Cardiac septum (tissue), 1 donor: ENCODE measurements at regions of chr10 and their contacts with region 1.

Region 1: DNA sequence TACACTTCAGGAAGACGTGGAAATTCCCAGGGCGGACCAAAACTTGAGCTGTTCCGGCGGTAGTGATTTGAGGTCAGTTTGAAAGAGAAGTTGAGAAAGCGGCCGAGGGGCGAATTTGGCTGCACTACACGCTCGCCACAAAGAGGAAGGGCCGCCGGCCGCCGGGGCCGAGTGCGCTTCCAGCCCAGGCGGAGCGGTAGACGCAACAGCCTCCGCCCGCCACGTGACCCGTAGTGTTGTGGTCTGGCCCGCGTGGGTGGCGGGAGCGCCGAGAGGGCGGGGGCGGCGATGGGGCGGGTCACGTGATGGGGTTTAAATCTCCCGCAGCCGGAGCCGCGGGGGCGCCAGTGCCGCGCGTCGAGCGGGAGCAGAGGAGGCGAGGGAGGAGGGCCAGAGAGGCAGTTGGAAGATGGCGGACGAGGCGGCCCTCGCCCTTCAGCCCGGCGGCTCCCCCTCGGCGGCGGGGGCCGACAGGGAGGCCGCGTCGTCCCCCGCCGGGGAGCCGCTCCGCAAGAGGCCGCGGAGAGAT is at the start of gene SIRT1:
- DNase-seq: peak; percentile 97
- total RNA-seq, gene SIRT1: 16.1 TPM

Region 2: DNA sequence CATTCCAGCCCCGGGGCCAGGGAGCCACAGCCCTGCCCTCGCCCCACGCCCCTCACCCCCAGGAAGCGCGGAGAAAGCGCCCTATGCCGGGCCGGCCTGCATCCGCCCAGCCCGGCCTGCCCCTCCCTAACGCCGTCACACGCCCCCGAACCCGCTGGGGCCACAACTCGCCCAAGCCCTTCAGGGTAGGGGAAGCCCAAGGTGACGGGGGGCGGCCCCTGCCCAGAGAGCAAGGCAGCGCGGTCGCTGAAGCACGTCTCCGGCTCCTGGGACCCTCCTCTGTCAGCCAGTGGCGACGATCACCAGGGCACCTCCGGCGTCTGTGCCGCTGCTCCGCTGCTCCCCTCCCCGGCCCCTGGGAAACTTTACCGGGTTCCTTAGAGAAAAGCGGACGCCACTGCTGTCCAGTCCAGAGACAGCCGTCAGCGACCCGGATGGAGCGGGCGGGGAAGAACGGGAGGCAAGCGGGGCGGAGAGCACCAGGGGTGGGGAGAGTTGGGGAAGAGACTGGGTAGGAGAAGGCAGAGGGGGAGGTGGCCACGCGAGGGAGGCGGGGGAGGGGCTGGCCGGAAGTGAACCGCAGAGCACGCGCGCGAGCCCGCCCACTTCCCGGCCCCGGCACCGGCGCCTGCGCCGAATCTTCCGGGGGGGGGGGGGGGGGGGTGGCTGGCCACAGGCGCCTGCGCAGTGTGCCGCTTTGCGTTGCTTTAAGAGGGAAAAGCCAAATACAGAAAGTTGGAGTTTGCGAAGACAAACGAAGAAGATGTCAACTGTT is 190.6 kb after region 1 on chr10 and contains the start of gene HERC4:
- intact Hi-C with region 1: loop called (anchors 1 kb)
- DNase-seq: peak; percentile 98
- total RNA-seq, gene HERC4: 43.0 TPM

Region 3: DNA sequence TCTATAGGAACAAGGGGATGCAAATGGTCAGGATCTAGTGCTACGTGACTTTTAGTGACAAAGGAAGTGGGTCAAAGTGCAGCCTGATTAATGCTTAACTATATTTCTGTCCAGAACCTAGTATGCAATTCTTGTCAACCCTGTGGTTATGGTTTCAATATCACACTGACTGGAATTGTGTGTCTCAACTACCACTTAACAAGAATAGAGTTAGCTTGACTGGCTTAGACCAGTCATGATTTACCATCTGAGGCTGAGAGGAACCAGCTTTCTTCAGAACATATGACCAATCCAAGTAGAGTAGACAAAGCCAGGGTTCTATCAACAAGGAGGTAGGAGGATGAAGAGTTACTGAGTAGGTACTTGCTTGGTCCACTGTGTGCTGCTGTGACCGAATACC is 279.4 kb after region 1 on chr10:
- intact Hi-C with region 1: no loop called
- DNase-seq: no peak

Region 4: GRCh38 chr10:68331455-68332258 is 447.3 kb after region 1 on chr10 and contains the start of gene HNRNPH3:
- intact Hi-C with region 1: loop called (anchors 10 kb)
- DNase-seq: peak; percentile 99
- total RNA-seq, gene HNRNPH3: 110 TPM